BJ (cell line): ENCODE measurements at regions of chr2 and their contacts with region 1.

Region 1: DNA sequence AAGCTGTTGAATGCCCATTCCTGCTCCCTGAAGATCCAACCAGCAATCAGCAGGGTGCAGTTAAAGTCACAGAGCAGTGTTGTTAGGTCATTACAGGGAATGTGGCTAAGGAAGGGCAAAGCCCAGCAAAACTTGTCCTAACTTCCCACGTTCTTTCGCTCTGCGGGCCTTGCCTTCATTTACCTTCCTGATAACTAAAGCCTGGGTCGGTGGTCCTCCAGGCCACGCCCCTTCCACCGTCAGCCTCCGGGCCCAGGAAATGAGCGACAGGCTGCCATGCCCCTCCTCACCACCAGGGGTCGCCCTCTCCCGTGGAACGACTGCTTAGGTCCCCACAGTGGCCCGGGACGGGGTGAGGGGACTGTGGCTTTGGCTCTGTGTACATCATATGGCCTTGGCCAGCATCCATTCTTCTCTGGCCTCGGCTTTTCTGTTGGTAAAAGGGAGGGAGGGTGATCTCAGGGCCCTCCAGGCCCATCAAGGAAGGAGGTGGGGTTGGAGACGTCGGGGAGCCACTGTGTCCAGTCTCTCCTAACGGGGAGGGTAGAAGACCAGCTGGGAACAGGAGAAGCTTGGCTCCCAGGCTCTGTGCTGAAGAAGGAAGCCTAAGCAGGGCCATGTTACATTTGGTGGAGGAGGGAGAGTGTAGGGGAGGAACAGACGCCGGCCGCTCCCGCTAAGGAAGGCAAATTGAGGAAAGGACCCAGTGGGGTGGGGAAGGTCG is 2.2 kb downstream of the SH2D6 start:
- DNase-seq: no peak
- H3K4me3 ChIP-seq: no peak overlapping the region
- H3K27me3 ChIP-seq: no peaks in the 10 kb centered on the region
- CTCF ChIP-seq: peak; percentile 99

Region 2: GRCh38 chr2:84891355-84892010 is 529.2 kb before region 1 on chr2:
- CTCF ChIA-PET with region 1: no interaction called
- POLR2A ChIA-PET with region 1: no interaction called
- DNase-seq: no peak
- H3K4me3 ChIP-seq: no peak overlapping the region
- H3K27me3 ChIP-seq: no peaks in the 10 kb centered on the region
- CTCF ChIP-seq: no peak

Region 3: GRCh38 chr2:85433511-85434089 is 12.9 kb after region 1 on chr2:
- CTCF ChIA-PET with region 1: interaction called, 19 read pairs
- POLR2A ChIA-PET with region 1: no interaction called
- DNase-seq: peak; percentile 91
- H3K4me3 ChIP-seq: no peak overlapping the region
- H3K27me3 ChIP-seq: no peaks in the 10 kb centered on the region
- CTCF ChIP-seq: no peak

Region 4: DNA sequence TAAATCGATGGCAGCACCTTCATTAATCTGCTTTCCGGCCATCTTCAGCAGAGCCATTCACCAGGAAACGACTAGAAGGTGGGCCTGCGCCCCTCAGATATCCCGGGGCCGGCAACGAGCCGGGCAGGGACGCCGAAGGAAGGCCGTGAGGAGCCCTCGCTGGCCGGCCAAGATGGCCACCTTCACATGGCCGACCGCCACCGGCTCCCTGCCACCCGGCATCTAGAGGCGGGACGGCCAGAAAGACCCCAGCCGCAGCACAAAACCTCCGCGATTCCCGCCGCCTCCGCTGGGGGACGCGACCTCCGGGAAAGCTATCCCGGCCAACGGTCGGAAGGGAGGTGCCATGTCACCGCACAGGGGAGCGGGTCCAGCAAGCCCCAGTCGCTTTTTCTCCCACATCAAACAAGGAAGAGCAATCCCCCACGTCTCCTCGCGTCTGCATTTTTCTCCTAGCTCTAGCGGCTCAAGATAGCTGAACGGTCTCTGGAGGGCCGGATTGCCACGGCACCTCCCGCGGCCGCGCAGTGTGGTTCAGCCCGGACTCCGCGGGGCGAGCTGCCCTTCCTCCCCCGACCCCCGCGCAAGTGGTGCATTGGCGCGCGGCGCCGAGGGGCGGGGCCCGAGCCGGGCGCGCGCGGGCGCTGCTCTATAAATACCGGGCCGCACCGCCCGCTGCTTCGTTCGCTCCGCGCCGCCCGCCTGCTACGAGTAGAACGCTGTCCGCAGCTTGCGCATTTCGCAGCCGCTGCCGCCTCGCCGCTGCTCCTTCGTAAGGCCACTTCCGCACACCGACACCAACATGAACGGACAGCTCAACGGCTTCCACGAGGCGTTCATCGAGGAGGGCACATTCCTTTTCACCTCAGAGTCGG is 118.0 kb after region 1 on chr2 and contains the start of gene MAT2A:
- CTCF ChIA-PET with region 1: interaction called, 460 read pairs
- POLR2A ChIA-PET with region 1: interaction called, 6 read pairs
- DNase-seq: no peak
- H3K4me3 ChIP-seq: peak within 1 kb of the TSS; percentile 98
- H3K27me3 ChIP-seq: no peaks in the 10 kb centered on the region
- CTCF ChIP-seq: peak; percentile 83
- polyA plus RNA-seq, gene MAT2A: 261 and 302 TPM in 2 replicates

Region 5: GRCh38 chr2:85561317-85561979 is 140.8 kb after region 1 on chr2 and contains the start of gene GGCX:
- CTCF ChIA-PET with region 1: interaction called, 30 read pairs
- POLR2A ChIA-PET with region 1: no interaction called
- DNase-seq: peak; percentile 60
- H3K4me3 ChIP-seq: peak within 1 kb of the TSS; percentile 85
- H3K27me3 ChIP-seq: no peaks in the 10 kb centered on the region
- CTCF ChIP-seq: no peak
- polyA plus RNA-seq, gene GGCX: 44.4 and 45.9 TPM in 2 replicates